Aorta (tissue), 5 donors: ENCODE measurements at regions of chr13 and their contacts with region 1.

Region 1: DNA sequence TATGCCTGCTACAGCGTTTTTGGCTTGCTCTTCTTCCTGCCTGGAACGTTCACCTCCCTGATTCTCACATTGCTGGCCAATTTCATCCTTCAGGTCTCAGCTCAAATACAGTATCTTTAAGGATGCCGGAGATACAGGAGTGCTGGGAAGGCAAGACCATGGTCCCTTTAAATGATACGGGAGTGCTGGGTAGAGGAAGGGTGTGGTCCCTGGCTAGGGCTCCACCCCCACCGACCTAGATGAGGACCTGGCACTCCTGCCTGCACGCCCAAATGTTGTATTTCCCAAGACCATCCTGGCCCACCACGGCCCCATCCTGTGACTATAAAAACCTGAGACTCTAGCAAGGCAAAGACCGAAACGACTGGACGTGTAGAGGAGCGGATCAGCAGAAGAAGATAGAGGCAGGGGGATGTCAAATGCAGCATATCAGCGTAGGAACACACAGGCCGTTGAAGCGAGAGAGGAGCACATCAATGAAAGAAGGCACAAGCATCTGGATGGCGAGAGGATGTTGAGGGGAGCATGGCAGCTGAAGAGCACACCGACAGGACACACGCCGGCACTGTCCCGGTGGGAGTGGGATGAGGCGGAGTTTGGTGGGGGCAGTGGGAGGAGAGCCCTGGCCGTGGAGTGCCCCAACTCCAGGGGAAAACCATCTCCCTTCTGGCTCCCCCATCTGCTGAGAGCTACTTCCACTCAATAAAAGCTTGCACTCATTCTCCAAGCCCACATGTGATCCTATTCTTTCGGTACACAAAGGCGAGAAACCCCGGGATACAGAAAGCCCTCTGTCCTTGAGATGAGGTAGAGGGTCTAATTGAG is 74.0 kb downstream of the PCDH9 start:
- DNase-seq: no peak
- ATAC-seq: no peak
- H3K4me3 ChIP-seq: no peak overlapping the region
- H3K27ac ChIP-seq: no peak overlapping the region
- H3K4me1 ChIP-seq: no peaks in the 10 kb centered on the region
- H3K27me3 ChIP-seq: no peaks in the 10 kb centered on the region

Region 2: DNA sequence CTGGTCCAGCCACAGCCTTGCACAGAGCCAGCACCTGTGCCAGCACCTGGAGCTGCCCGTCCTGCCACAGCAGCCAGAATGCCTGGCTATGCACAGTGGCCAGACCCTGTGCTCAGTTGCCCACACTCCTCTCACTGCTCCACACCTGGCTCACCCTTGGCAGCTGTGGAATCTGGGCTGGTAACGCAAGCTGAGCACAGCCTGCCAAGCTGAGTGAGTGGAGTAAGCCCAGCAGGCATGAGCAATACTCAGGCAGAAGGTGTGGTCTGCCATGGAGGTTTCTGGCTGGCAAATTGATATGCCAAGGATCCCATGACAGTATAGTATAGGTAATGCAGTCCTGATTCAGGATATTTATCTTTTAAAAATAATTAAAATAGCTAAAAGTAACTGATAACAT is 48.1 kb before region 1 on chr13:
- intact Hi-C with region 1: loop called in 1 of 2 experiments (anchors 5 kb)
- DNase-seq: no peak
- ATAC-seq: no peak
- H3K4me3 ChIP-seq: no peak overlapping the region
- H3K27ac ChIP-seq: no peak overlapping the region
- H3K4me1 ChIP-seq: no peaks in the 10 kb centered on the region
- H3K27me3 ChIP-seq: no peaks in the 10 kb centered on the region

Region 3: DNA sequence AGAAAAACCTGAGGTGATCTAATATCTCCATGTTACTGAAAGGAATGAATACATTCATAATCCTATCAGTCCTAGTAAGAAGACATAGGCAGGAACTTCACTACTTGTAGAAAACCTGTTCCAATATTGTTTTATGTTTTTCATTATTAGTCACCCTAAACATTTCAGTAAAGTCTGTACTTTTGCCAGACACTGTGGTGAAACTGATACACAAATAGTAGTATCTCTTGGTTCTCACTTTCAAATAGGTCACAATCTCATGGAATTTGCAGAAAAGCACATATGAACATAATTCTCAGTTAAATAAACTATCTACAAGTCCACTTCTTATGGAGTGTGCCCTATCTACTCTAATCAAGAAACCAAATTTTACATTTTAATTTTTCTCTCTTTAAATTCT is 162.3 kb after region 1 on chr13:
- intact Hi-C with region 1: no loop called
- DNase-seq: no peak
- ATAC-seq: no peak
- H3K4me3 ChIP-seq: no peak overlapping the region
- H3K27ac ChIP-seq: no peak overlapping the region
- H3K4me1 ChIP-seq: no peaks in the 10 kb centered on the region
- H3K27me3 ChIP-seq: no peaks in the 10 kb centered on the region

Region 4: GRCh38 chr13:67366533-67366932 is 210.4 kb after region 1 on chr13:
- intact Hi-C with region 1: no loop called
- DNase-seq: no peak
- ATAC-seq: no peak
- H3K4me3 ChIP-seq: no peak overlapping the region
- H3K27ac ChIP-seq: no peak overlapping the region
- H3K4me1 ChIP-seq: no peaks in the 10 kb centered on the region
- H3K27me3 ChIP-seq: no peaks in the 10 kb centered on the region